ENCODE measurements at regions of chr3 and their contacts with region 1.

Region 1: DNA sequence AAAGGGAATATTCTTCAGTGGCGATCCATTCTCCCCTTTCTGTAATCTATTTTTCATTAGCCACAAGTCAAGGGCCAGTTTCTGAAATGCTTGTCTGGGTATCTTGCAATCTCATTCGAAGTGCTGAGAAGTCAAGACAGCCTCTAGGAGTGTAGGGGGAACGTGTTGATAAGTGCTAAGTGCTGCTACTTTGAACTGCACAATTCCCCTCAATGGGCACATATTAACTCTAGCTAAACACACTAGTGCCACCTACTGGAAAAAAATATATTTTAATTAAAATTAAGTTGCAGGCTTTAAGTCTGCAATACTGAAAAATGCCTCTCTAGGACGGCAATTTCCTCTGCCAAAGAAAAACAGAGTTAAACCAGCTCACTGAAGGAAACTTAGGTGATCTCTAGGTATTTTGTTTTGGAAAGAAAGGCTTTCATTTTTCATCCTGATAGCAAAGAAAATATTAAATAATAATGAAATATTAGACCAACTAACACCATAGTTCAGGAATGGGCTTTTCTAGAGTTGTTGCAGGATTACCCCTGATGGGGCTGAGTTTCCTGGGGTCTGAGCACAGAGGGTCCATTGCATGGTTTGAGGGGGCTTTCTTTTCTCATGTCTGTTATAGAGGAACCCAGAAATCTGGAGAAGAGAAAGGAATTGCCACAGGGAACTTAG is 181.9 kb upstream of the KBTBD8 start:
- DNase-seq: no peak
- H3K4me3 ChIP-seq: no peak overlapping the region
- H3K27ac ChIP-seq: no peak overlapping the region
- H3K4me1 ChIP-seq: peaks cover 9% of the 10 kb centered on the region
- H3K27me3 ChIP-seq: no peaks in the 10 kb centered on the region
- CTCF ChIP-seq: peak; percentile 70

Region 2: GRCh38 chr3:66276705-66277274 is 539.4 kb before region 1 on chr3:
- intact Hi-C with region 1: loop called (anchors 2 kb)
- DNase-seq: no peak
- H3K4me3 ChIP-seq: no peak overlapping the region
- H3K27ac ChIP-seq: no peak overlapping the region
- H3K4me1 ChIP-seq: peaks cover 3% of the 10 kb centered on the region
- H3K27me3 ChIP-seq: no peaks in the 10 kb centered on the region
- CTCF ChIP-seq: peak; percentile 81

Region 3: GRCh38 chr3:66407611-66408218 is 408.5 kb before region 1 on chr3:
- intact Hi-C with region 1: loop called (anchors 5 kb)
- DNase-seq: peak; percentile 71
- H3K4me3 ChIP-seq: no peak overlapping the region
- H3K27ac ChIP-seq: peak overlapping the region; percentile 75
- H3K4me1 ChIP-seq: peaks cover 76% of the 10 kb centered on the region
- H3K27me3 ChIP-seq: no peaks in the 10 kb centered on the region
- CTCF ChIP-seq: peak; percentile 97

Measured in left ventricle myocardium inferior (tissue), 1 donor.